Posterior vena cava (tissue), 2 donors: ENCODE measurements at regions of chr2 and their contacts with region 1.

Region 1: DNA sequence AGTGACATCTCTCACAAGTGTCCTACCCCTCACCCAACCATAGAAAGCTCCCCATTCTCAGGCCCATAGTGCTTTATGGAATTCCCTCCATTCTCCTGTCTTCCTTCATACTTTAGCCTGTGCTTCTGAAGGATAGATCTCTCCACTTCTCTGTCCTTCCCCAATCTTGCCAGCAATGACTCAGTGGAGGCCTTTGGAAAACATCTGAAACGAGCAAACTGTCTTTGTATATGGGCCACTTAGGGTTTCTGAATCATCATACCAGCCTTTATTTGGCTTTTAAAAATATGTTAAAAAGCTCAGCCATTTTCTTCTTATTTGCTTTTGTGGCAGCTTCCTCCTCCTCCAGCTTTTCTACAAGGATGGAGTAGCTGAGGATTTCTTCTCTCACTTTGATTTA is 65.6 kb upstream of the ZNF385B start:
- DNase-seq: no peak

Region 2: GRCh38 chr2:178770518-178770917 is 1156.5 kb before region 1 on chr2:
- intact Hi-C with region 1: loop called in 1 of 2 experiments (anchors 5 kb)
- DNase-seq: no peak